Activated T-helper 1 cell treated with anti-CD3 and anti-CD28 coated beads, Interleukin-12 subunit alpha, Interleukin-12 subunit beta, Interleukin-2, Interleukin-4 antibody, amounts not matched to agents 30 ng/mL and 10 ng/mL and 1 ng/mL, durations not matched to agents 14 hours and 24 hours and 36 hours (primary cell): ENCODE measurements at regions of chr2 and their contacts with region 1.

Region 1: GRCh38 chr2:218301176-218301819 is 9.0 kb upstream of the TMBIM1 start:
- DNase-seq: peak; percentile 83
- H3K4me3 Mint-ChIP-seq: no peak overlapping the region
- H3K27ac Mint-ChIP-seq: no peak overlapping the region
- H3K4me1 Mint-ChIP-seq: peaks cover 5% of the 10 kb centered on the region
- H3K27me3 Mint-ChIP-seq: peaks cover 2% of the 10 kb centered on the region

Region 2: GRCh38 chr2:218360447-218360846 is 59.1 kb after region 1 on chr2:
- intact Hi-C with region 1: loop called (anchors 1 kb)
- DNase-seq: no peak
- H3K4me3 Mint-ChIP-seq: no peak overlapping the region
- H3K27ac Mint-ChIP-seq: no peak overlapping the region
- H3K4me1 Mint-ChIP-seq: no peaks in the 10 kb centered on the region
- H3K27me3 Mint-ChIP-seq: peaks cover 9% of the 10 kb centered on the region

Region 3: GRCh38 chr2:218367415-218368153 is 66.3 kb after region 1 on chr2:
- intact Hi-C with region 1: loop called (anchors 2 kb)
- DNase-seq: peak; percentile 64
- H3K4me3 Mint-ChIP-seq: peak overlapping the region; percentile 78
- H3K27ac Mint-ChIP-seq: peak overlapping the region; percentile 61
- H3K4me1 Mint-ChIP-seq: peaks cover 7% of the 10 kb centered on the region
- H3K27me3 Mint-ChIP-seq: peaks cover 42% of the 10 kb centered on the region

Region 4: GRCh38 chr2:218466016-218466521 is 164.8 kb after region 1 on chr2:
- intact Hi-C with region 1: loop called (anchors 2 kb)
- DNase-seq: no peak
- H3K4me3 Mint-ChIP-seq: no peak overlapping the region
- H3K27ac Mint-ChIP-seq: no peak overlapping the region
- H3K4me1 Mint-ChIP-seq: peaks cover 4% of the 10 kb centered on the region
- H3K27me3 Mint-ChIP-seq: no peaks in the 10 kb centered on the region

Region 5: GRCh38 chr2:218516614-218517013 is 215.3 kb after region 1 on chr2:
- intact Hi-C with region 1: loop called (anchors 5 kb)
- DNase-seq: no peak
- H3K4me3 Mint-ChIP-seq: no peak overlapping the region
- H3K27ac Mint-ChIP-seq: no peak overlapping the region
- H3K4me1 Mint-ChIP-seq: peaks cover 23% of the 10 kb centered on the region
- H3K27me3 Mint-ChIP-seq: no peaks in the 10 kb centered on the region